Posterior cingulate gyrus (tissue), 11 donors: ENCODE measurements at regions of chr21 and their contacts with region 1.

Region 1: GRCh38 chr21:24045775-24046215 is 1561.5 kb downstream of the MRPL39 start:
- DNase-seq: peak; percentile 86 to 99 (median 92)

Region 2: DNA sequence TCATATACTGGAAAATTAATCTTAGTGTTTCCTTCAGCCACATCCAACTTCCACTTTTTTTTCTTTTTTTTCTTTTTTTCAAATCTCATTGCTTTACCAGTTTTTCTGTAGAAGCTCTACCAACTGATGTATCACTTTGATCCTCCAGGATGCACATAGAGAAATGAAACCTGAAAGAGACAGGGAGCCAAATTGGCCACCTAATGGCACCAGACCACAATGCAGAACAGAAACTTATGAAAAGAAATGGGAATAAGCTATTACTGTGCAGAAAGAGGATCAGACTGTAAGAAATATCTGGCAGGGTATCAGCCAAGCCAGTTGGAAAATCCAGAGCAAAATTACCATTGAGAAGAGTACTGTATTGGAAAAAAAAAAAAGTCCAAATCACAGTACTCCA is 47.2 kb after region 1 on chr21:
- intact Hi-C with region 1: no loop called
- DNase-seq: no peak

Region 3: DNA sequence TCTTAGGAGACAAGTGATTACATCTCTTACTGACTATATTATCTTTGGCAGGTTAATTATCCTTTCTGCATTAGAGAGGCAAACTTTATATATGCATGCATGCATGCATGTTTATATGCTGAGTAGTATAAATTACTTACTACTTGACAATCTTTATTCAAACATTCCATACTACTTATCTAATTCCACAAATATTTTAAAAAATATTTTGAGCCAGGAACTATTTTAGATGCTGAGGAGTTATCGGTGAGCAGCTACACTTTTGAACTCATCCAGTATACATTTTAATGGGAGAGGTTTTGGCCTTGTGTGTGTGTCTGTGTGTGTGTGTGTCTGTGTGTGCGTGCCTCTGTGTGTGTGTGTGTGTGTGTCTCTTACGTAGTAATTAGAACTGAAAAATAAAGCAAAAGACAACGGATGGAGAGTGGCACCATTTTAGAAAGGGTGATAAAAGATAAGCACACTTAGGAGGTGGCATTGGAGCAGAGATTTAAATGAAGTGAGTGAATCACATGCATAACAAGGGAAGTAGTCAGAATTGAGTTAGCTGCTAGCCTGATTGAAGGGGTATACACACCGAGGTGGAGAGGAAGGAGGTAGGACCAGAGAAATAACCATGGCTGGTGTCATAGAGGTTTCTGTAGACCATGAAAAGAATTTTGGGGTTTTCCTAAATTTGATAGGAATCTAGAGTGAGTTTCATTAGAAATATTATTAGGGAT is 73.1 kb after region 1 on chr21:
- intact Hi-C with region 1: loop called (anchors 5 kb)
- DNase-seq: no peak

Region 4: DNA sequence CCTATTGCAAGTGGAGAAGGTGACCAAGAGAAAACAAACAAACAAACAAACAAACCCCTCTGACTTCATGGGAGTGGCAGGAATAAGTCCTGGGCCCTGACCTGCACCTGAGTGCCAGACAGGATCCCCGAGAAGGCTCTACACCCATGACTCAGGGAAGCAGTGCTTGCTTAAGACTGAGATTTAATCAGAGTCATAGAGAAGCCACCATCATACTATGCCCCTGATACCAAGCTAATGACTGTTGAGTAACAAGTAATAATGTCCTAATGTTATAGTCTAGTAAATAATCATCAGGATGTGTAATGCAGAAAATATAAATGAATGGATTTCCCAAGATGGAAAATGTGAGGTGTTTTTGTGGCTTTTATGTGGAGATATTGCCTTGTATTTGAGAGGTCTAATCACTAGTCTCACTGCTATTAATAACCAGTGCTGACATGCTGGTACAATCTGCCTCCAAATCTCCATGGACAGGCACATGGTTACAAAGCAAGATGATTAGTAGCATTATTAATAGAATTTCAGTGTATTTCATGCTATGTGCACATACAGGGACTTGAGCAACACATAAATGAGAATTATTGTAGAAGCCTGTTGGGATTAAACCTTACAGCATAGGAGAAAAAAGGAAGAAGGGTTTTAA is 270.6 kb after region 1 on chr21:
- intact Hi-C with region 1: no loop called
- DNase-seq: no peak